Caco-2 (cell line): ENCODE measurements at regions of chr1 and their contacts with region 1.

Region 1: DNA sequence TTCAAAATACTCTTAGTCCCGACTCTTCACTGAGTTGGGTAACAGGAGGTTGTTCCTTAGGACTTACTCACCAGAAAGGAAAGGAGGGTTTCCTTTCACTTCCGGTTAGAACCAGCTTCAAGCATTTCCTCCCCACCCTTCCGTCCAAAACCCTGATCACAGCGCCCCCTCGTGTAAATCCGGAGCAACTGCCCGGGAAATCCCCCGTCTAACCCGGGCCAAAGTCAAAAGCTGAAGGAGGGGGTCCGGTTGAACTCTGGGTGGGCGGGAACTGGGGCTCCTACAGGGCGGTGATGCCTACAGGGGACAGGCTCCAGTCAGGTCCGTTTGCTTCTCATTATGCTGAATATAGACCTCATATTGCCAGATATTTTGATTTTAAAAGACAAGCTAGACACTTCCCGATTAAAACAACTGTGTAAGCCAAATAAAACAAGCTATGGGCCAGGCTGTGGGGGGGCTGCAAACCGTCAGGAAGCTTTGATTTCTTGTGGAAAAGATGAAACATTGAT is 15.0 kb upstream of the MTARC2 start:
- DNase-seq: peak; percentile 82 to 87
- H3K4me3 ChIP-seq: no peak overlapping the region
- H3K4me3 Mint-ChIP-seq: no peak overlapping the region
- H3K27ac Mint-ChIP-seq: peak overlapping the region; percentile 24
- H3K4me1 ChIP-seq: peaks cover 22% of the 10 kb centered on the region
- H3K4me1 Mint-ChIP-seq: peaks cover 6% of the 10 kb centered on the region
- H3K27me3 ChIP-seq: no peaks in the 10 kb centered on the region
- H3K27me3 Mint-ChIP-seq: no peaks in the 10 kb centered on the region
- CTCF ChIP-seq: peak; percentile 87 to 89

Region 2: DNA sequence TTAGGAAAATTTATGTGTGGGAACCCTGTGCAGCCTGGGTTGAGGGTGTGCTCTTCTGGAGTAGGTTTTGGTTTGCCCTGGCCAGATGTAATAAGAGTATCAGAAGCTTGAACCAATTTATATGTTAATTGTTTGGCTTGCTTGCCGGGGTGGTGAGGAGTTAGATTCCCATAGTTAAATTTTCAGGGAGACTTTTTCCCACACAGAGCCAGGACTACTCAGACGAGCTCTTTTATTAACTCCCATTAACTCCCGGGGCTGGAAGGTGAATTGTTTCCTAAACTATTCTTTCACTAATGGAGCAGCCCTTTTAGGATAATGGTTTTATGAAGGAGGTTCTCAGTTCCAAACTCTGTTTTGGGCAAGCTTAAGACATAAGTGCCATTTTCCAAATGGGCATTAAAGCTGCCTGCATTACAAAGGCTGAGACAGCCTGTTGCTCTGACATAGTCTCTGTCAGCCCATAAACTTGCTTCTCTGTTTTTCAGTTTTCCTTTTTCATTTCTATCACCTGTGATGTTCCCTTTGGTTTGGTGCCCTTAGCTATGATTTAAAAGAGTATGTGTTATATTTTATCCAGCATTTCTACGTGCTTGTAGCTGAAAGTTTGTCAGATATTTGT is 442.9 kb before region 1 on chr1:
- CTCF ChIA-PET with region 1: no interaction called
- POLR2A ChIA-PET with region 1: no interaction called
- intact Hi-C with region 1: no loop called
- DNase-seq: no peak
- H3K4me3 ChIP-seq: no peak overlapping the region
- H3K4me3 Mint-ChIP-seq: no peak overlapping the region
- H3K27ac Mint-ChIP-seq: no peak overlapping the region
- H3K4me1 ChIP-seq: no peaks in the 10 kb centered on the region
- H3K4me1 Mint-ChIP-seq: no peaks in the 10 kb centered on the region
- H3K27me3 ChIP-seq: no peaks in the 10 kb centered on the region; the same call in 1 of the 2 replicates
- H3K27me3 Mint-ChIP-seq: peaks cover 20% of the 10 kb centered on the region
- CTCF ChIP-seq: no peak

Region 3: DNA sequence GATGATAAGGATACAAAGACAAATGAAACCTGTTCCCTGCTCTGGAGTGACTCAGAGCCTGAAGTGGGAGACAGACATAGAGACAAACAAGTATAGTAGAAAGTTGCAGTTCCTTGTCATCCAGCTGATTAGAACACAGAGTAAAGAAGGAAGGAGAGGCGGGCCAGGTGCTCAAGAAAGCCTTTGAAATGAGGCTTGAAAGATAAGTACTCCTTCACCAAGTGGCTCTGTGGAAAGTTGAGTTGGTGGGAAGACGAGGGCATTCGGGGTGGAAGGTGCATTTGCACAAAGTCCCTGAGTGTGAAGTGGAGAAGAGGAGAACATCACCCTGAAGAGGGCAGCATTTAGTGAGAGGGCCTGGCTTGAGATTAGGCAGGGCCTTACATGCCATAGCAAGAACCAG is 188.2 kb before region 1 on chr1:
- CTCF ChIA-PET with region 1: interaction called, 3 read pairs
- POLR2A ChIA-PET with region 1: no interaction called
- intact Hi-C with region 1: loop called (anchors 5 kb)
- DNase-seq: peak in 1 of 2 experiments; percentile 20
- H3K4me3 ChIP-seq: no peak overlapping the region
- H3K4me3 Mint-ChIP-seq: no peak overlapping the region
- H3K27ac Mint-ChIP-seq: no peak overlapping the region
- H3K4me1 ChIP-seq: no peaks in the 10 kb centered on the region
- H3K4me1 Mint-ChIP-seq: no peaks in the 10 kb centered on the region
- H3K27me3 ChIP-seq: no peaks in the 10 kb centered on the region
- H3K27me3 Mint-ChIP-seq: peaks cover 9% of the 10 kb centered on the region
- CTCF ChIP-seq: peak in 1 of 2 experiments; percentile 37

Region 4: DNA sequence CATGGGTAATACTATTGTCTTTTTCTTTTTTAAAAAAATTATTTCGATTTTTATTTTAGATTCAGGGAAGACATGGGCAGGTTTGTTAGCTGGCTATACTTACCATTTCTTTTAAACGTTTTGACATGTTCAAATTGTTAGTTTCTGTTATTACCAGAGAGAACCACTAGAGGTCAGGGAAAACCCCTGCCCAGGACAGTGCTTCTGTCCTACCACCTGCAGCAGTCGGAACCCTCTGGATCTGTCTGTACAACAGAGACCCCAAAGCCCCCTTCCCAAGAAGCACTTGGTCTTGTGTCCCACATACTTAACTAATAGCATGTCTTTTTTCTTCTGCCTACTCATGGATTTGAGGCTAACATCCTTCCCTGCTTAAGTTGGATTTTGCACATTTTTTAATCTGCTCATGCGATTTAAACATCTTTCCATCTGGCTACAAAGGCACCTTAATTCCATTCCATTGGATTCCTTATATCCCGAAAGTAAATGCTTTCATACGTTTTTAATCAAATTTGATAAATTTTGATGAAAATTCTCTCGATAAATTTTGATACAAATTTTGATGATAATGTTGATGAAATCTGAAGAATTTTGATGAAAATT is 53.0 kb before region 1 on chr1:
- CTCF ChIA-PET with region 1: interaction called, 15 read pairs
- POLR2A ChIA-PET with region 1: no interaction called
- intact Hi-C with region 1: loop called (anchors 1 kb)
- DNase-seq: peak in 1 of 2 experiments; percentile 59
- H3K4me3 ChIP-seq: no peak overlapping the region
- H3K4me3 Mint-ChIP-seq: no peak overlapping the region
- H3K27ac Mint-ChIP-seq: no peak overlapping the region
- H3K4me1 ChIP-seq: no peaks in the 10 kb centered on the region
- H3K4me1 Mint-ChIP-seq: no peaks in the 10 kb centered on the region
- H3K27me3 ChIP-seq: no peaks in the 10 kb centered on the region
- H3K27me3 Mint-ChIP-seq: peaks cover 4% of the 10 kb centered on the region
- CTCF ChIP-seq: peak; percentile 77 to 90

Region 5: GRCh38 chr1:220690140-220691025 is 42.8 kb before region 1 on chr1 and contains the start of gene C1orf115:
- CTCF ChIA-PET with region 1: interaction called, 33 read pairs
- POLR2A ChIA-PET with region 1: interaction called, 3 read pairs
- intact Hi-C with region 1: loop called (anchors 1 kb)
- DNase-seq: peak; percentile 80 to 95
- H3K4me3 ChIP-seq: peak within 1 kb of the TSS; percentile 94
- H3K4me3 Mint-ChIP-seq: peak within 1 kb of the TSS; percentile 94
- H3K27ac Mint-ChIP-seq: peak within 1 kb of the TSS; percentile 82
- H3K4me1 ChIP-seq: peaks cover 8% of the 10 kb centered on the region; the same call in 1 of the 2 replicates
- H3K4me1 Mint-ChIP-seq: no peaks in the 10 kb centered on the region
- H3K27me3 ChIP-seq: no peaks in the 10 kb centered on the region
- H3K27me3 Mint-ChIP-seq: no peaks in the 10 kb centered on the region
- CTCF ChIP-seq: peak; percentile 95 to 98
- total RNA-seq, gene C1orf115: 26.5 and 33.9 TPM in 2 replicates

Region 6: GRCh38 chr1:220700556-220701179 is 32.5 kb before region 1 on chr1:
- CTCF ChIA-PET with region 1: interaction called, 19 read pairs
- POLR2A ChIA-PET with region 1: no interaction called
- intact Hi-C with region 1: no loop called
- DNase-seq: no peak
- H3K4me3 ChIP-seq: no peak overlapping the region
- H3K4me3 Mint-ChIP-seq: no peak overlapping the region
- H3K27ac Mint-ChIP-seq: no peak overlapping the region
- H3K4me1 ChIP-seq: peaks cover 28% of the 10 kb centered on the region
- H3K4me1 Mint-ChIP-seq: peaks cover 12% of the 10 kb centered on the region
- H3K27me3 ChIP-seq: no peaks in the 10 kb centered on the region
- H3K27me3 Mint-ChIP-seq: no peaks in the 10 kb centered on the region
- CTCF ChIP-seq: no peak

Region 7: DNA sequence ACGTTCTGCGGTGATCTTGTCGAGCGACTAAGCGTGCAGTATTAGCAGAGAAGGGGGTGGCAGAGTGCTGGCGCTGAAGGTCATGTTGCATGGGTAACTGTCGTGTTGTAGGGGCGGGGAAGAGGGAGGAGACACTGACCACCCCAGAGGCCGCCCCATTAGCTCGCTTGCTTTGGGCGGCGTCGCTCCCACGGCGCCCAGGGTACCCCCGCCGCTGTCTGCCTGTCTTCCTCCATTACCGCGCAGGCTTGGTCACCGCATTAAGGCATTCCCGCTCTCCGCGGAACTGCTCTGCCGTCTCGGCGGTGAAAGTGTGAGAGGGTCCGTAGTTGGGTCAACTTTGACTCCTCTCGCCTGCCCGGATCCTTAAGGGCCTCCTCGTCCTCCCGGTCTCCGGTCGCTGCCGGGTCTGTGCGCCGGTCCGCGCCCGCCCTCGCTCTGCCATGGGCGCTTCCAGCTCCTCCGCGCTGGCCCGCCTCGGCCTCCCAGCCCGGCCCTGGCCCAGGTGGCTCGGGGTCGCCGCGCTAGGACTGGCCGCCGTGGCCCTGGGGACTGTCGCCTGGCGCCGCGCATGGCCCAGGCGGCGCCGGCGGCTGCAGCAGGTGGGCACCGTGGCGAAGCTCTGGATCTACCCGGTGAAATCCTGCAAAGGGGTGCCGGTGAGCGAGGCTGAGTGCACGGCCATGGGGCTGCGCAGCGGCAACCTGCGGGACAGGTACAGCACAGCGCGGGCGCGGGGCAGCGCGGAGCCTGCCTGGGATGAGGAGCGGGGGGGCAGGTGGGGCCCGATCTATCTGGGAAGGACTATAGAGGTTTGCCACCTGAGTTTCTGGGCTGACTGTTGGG is 15.2 kb after region 1 on chr1 and contains the start of gene MTARC2:
- CTCF ChIA-PET with region 1: interaction called, 16 read pairs
- POLR2A ChIA-PET with region 1: interaction called, 8 read pairs
- intact Hi-C with region 1: loop called (anchors 1 kb)
- DNase-seq: peak; percentile 80 to 81
- H3K4me3 ChIP-seq: peak within 1 kb of the TSS; percentile 59
- H3K4me3 Mint-ChIP-seq: peak within 1 kb of the TSS; percentile 77
- H3K27ac Mint-ChIP-seq: peak within 1 kb of the TSS; percentile 47
- H3K4me1 ChIP-seq: no peaks in the 10 kb centered on the region
- H3K4me1 Mint-ChIP-seq: peaks cover 13% of the 10 kb centered on the region
- H3K27me3 ChIP-seq: no peaks in the 10 kb centered on the region
- H3K27me3 Mint-ChIP-seq: no peaks in the 10 kb centered on the region
- CTCF ChIP-seq: no peak
- total RNA-seq, gene MTARC2: 15.8 and 16.5 TPM in 2 replicates

Region 8: DNA sequence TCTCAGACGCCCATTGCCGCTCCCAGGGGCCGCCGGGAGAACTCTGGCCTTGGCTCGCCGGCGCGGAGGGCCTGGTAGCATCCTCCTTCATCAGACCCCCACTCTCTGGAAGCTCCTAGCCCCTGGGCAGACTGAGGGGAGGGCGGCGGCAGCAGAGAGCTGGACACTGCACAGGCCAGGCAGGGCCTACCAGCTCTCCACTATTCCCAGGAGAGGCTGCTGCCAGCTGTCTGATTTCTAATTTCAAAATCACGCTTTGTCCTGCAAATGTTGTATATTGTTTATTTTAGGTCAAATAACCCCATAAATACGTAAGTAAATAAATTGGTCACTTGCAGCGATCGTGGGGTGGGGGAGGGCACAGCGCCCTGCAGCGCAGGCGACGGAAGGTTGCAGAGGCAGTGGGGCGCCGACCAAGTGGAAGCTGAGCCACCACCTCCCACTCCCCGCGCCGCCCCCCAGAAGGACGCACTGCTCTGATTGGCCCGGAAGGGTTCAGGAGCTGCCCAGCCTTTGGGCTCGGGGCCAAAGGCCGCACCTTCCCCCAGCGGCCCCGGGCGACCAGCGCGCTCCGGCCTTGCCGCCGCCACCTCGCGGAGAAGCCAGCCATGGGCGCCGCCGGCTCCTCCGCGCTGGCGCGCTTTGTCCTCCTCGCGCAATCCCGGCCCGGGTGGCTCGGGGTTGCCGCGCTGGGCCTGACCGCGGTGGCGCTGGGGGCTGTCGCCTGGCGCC is 53.4 kb after region 1 on chr1 and contains the start of gene MTARC1:
- CTCF ChIA-PET with region 1: interaction called, 16 read pairs
- POLR2A ChIA-PET with region 1: interaction called, 3 read pairs
- intact Hi-C with region 1: no loop called
- DNase-seq: peak; percentile 90 to 91
- H3K4me3 ChIP-seq: peak within 1 kb of the TSS; percentile 55
- H3K4me3 Mint-ChIP-seq: peak within 1 kb of the TSS; percentile 85
- H3K27ac Mint-ChIP-seq: peak within 1 kb of the TSS; percentile 81
- H3K4me1 ChIP-seq: peaks cover 33% of the 10 kb centered on the region
- H3K4me1 Mint-ChIP-seq: peaks cover 28% of the 10 kb centered on the region
- H3K27me3 ChIP-seq: no peaks in the 10 kb centered on the region
- H3K27me3 Mint-ChIP-seq: no peaks in the 10 kb centered on the region
- CTCF ChIP-seq: no peak
- total RNA-seq, gene MTARC1: 88.7 and 93.0 TPM in 2 replicates

Region 9: DNA sequence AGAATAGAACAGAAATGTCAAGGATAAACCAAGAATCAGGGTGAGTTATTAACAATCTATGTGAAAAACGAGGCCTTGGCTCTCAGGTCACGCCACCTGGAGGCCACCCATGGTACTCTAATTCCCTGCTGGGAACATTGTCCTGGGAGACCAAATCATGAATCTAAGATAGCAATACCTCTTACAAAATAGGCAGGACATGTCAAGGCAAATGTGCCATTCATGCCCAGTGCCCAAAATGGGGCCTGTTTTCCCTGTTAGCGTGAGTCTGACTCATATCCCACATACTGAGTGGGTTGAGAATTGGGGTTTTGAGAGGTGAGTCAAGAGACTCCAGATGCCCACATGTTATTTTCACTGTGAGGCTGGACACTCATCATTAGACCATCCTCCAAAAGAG is 1434.0 kb after region 1 on chr1:
- CTCF ChIA-PET with region 1: no interaction called
- POLR2A ChIA-PET with region 1: no interaction called
- intact Hi-C with region 1: no loop called
- DNase-seq: peak in 1 of 2 experiments; percentile 49
- H3K4me3 ChIP-seq: no peak overlapping the region
- H3K4me3 Mint-ChIP-seq: no peak overlapping the region
- H3K27ac Mint-ChIP-seq: no peak overlapping the region
- H3K4me1 ChIP-seq: no peaks in the 10 kb centered on the region
- H3K4me1 Mint-ChIP-seq: no peaks in the 10 kb centered on the region
- H3K27me3 ChIP-seq: no peaks in the 10 kb centered on the region
- H3K27me3 Mint-ChIP-seq: peaks cover 2% of the 10 kb centered on the region
- CTCF ChIP-seq: peak; percentile 41 to 50